B cell (primary cell): ENCODE measurements at regions of chrX and their contacts with region 1.

Region 1: DNA sequence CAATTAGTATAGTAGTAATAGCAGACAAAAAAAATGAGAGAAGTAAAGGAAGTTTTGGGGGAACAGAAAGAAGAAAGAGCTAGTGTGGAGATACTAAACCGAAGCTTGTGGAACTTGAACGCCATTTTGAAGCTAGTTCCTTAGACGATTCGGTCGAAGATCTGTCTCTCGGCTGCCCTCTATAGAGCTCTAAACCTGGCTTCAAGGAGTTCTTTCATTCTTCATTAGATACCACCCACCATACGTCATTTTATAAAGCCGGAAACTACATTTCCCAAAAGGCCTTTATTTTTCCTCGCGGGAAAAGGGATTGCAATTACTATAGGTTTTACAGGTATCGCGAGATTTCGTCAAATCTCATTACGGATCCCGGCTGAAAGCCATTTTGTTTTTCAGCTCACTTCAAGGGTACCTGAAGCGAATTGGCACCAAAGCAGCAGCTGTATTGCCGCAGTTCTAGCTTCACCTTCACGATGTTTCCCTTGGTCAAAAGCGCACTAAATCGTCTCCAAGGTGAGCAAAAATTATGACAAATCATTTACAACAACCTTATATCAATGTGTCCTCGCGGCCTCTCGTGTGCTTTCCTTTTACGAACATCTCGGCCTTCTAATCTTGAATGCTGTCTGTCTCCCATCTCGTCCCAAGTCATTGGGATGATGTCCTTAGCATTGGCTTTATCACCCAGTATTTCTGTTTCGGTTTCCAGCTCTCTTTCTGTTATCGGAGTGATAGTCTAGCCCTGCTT is at the start of gene COX7B:
- DNase-seq: peak; percentile 92
- ATAC-seq: peak; percentile 67
- H3K4me3 ChIP-seq: peak within 1 kb of the TSS; percentile 62 to 95 (median 77)
- H3K4me3 Mint-ChIP-seq: peak within 1 kb of the TSS; percentile 96
- H3K27ac ChIP-seq: peak within 1 kb of the TSS; percentile 83 to 91
- H3K27ac Mint-ChIP-seq: peak within 1 kb of the TSS; percentile 96
- H3K4me1 ChIP-seq: peaks cover 6 to 8% of the 10 kb centered on the region in 2 donors
- H3K4me1 Mint-ChIP-seq: peaks cover 26% of the 10 kb centered on the region
- H3K27me3 ChIP-seq: no peaks in the 10 kb centered on the region
- H3K27me3 Mint-ChIP-seq: no peaks in the 10 kb centered on the region
- CTCF ChIP-seq: peak; percentile 56
- total RNA-seq, gene COX7B: 91.1 and 94.0 TPM in 2 replicates

Region 2: GRCh38 chrX:76427560-76428242 is 1471.6 kb before region 1 on chrX and contains the start of gene MAGEE1:
- CTCF ChIA-PET with region 1: no interaction called
- POLR2A ChIA-PET with region 1: no interaction called
- intact Hi-C with region 1: loop called (anchors 5 kb)
- DNase-seq: peak; percentile 90
- ATAC-seq: peak; percentile 89
- H3K4me3 ChIP-seq: peak within 1 kb of the TSS; percentile 1 to 74 (median 73)
- H3K4me3 Mint-ChIP-seq: peak within 1 kb of the TSS; percentile 92
- H3K27ac ChIP-seq: peak within 1 kb of the TSS; percentile 49 to 60
- H3K27ac Mint-ChIP-seq: peak within 1 kb of the TSS; percentile 90
- H3K4me1 ChIP-seq: peaks cover 6 to 17% of the 10 kb centered on the region in 2 donors
- H3K4me1 Mint-ChIP-seq: peaks cover 20% of the 10 kb centered on the region
- H3K27me3 ChIP-seq: no peaks in the 10 kb centered on the region
- H3K27me3 Mint-ChIP-seq: peaks cover 2% of the 10 kb centered on the region
- CTCF ChIP-seq: no peak
- total RNA-seq, gene MAGEE1: 6.7 and 7.0 TPM in 2 replicates

Region 3: DNA sequence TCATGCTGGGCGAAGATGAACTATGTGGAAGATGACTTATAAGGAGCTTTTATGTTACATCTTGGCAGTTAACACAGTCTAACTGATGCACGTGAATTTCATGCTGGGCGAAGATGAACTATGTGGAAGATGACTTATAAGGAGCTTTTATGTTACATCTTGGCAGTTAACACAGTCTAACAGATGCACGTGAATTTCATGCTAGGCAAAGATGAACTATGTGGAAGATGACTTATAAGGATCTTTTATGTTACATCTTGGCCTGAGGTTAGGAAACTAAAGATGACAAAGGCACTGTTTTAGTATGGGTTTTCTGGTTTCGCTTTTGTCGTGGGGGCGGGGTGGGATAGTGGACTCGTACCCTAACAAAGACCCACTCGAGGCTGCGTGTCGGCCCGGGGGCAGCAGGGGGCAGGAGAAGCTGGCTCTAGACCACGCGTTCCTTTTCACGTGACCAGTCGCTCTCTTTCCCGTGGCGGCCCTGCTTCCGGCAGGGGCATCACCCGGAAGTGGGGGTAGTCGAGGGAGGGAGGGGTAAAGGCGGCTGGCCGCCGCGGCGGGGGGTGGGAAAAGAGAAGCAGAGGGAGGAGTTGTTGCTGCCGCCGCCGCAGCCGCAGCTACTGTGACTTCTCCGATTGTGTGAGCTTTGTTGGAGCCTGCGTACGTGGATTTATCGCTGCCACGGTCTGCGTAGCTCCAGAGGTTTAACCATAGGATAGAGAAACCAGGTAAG is 11.0 kb after region 1 on chrX and contains the start of gene ATP7A:
- CTCF ChIA-PET with region 1: interaction called, 11 read pairs
- POLR2A ChIA-PET with region 1: interaction called, 10 read pairs
- intact Hi-C with region 1: loop called (anchors 1 kb)
- DNase-seq: peak; percentile 92
- ATAC-seq: peak; percentile 98
- H3K4me3 ChIP-seq: peak within 1 kb of the TSS; percentile 69 to 87 (median 81)
- H3K4me3 Mint-ChIP-seq: peak within 1 kb of the TSS; percentile 100
- H3K27ac ChIP-seq: peak within 1 kb of the TSS; percentile 83 to 88
- H3K27ac Mint-ChIP-seq: peak within 1 kb of the TSS; percentile 99
- H3K4me1 ChIP-seq: peaks cover 6 to 18% of the 10 kb centered on the region in 2 donors
- H3K4me1 Mint-ChIP-seq: peaks cover 24% of the 10 kb centered on the region
- H3K27me3 ChIP-seq: no peaks in the 10 kb centered on the region
- H3K27me3 Mint-ChIP-seq: no peaks in the 10 kb centered on the region
- CTCF ChIP-seq: peak; percentile 56
- total RNA-seq, gene ATP7A: 12.4 and 14.8 TPM in 2 replicates

Region 4: GRCh38 chrX:78103623-78104446 is 204.6 kb after region 1 on chrX and contains the start of gene PGK1:
- CTCF ChIA-PET with region 1: no interaction called
- POLR2A ChIA-PET with region 1: no interaction called
- intact Hi-C with region 1: loop called (anchors 1 kb)
- DNase-seq: peak; percentile 94
- ATAC-seq: peak; percentile 97
- H3K4me3 ChIP-seq: peak within 1 kb of the TSS; percentile 43 to 90 (median 76)
- H3K4me3 Mint-ChIP-seq: peak within 1 kb of the TSS; percentile 97
- H3K27ac ChIP-seq: peak within 1 kb of the TSS; percentile 87 to 89
- H3K27ac Mint-ChIP-seq: peak within 1 kb of the TSS; percentile 97
- H3K4me1 ChIP-seq: peaks cover 30 to 44% of the 10 kb centered on the region in 2 donors
- H3K4me1 Mint-ChIP-seq: peaks cover 41% of the 10 kb centered on the region
- H3K27me3 ChIP-seq: no peaks in the 10 kb centered on the region
- H3K27me3 Mint-ChIP-seq: no peaks in the 10 kb centered on the region
- CTCF ChIP-seq: no peak
- total RNA-seq, gene PGK1: 153 and 162 TPM in 2 replicates